A673 (cell line): ENCODE measurements at regions of chr1 and their contacts with region 1.

Region 1: DNA sequence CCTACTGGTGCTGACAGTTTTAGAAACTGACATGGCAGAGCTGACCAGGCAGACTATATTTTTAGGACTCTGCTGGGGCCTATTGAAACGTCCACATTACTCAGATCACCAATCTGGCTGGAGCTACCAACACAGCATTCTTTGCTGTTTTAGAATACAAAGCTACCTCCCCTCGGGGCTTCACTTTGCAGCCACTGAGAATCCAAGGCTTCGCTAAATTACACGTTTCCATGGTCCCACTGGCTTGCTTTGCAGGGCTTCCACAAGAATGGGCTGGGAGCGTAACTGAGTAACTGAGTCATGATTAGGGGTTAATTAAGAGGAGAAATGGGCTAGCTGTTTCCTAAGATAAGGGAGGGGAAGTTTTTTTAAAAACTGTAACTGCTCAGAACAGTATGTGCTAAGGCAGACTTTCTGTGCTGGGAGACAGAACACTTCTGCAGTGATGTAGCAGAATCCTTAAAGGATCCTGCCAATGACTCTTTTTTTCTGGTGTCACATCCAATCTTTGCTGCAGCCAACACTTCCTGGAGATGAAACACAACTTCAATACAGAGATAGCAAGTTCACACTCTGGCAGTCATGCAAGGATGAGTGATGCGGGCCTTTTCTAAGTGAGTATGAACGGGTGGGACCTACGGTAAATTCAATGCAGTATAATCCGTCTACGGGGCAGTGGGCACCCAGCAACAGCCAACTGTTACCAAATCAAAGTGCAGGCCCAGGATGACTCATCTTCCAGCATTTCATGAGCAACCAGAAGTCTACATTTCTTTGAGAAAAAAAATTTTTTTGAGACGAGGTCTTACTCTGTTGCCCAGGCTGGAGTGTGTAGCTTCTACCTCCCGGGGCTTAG is 21.5 kb downstream of the NDUFS5 start:
- DNase-seq: peak; percentile 27
- H3K4me3 ChIP-seq: no peak overlapping the region
- H3K27ac ChIP-seq: no peak overlapping the region
- H3K4me1 ChIP-seq: no peaks in the 10 kb centered on the region
- H3K27me3 ChIP-seq: no peaks in the 10 kb centered on the region
- CTCF ChIP-seq: no peak

Region 2: DNA sequence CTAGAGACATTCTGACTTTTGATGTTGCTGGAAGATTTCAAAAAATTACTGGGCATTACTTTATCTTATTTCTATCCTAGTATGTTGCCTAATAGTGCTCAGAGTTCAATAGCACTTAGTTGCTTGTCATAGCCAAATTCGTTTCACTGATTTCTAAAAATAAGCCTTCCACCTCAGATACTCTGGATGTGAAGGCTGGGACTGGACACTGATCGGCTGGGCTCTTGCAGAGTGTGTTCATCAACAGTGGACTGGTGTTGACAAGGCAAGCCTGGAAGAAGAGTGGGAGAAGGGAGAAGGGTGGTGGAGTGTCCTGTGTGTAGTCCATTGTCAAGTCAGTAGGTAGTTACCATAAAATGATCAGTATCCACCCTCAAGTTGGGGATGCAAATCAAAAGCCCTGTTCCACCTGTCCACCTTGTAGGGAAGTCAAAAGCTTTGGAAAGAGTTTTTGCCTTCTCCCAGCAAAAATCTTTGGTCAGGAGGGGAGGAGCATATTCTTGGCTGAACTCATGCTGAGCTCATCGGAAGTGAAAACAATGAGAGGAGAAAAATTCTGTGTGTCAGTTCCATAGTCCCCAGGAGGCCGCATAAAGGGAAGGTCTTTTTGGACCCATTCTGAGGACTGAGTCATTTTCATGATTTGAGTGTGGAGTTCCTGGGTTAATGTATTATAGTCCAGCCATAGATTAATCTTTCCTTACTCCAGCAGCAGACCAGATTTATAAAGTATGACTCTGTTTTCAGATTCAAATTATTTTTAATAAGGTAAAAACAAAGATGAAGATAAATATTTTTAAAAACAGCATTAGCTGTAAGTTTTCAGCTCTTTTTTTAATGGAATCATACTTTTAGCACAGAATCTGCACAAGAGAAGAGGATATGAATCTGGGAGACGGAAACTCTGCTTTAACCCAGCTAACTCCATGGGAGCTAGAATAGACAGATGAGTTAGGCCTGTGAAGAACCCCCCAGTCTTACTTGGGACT is 344.4 kb after region 1 on chr1:
- CTCF ChIA-PET with region 1: no interaction called
- POLR2A ChIA-PET with region 1: interaction called, 15 read pairs
- intact Hi-C with region 1: no loop called
- DNase-seq: peak; percentile 94
- H3K4me3 ChIP-seq: peak overlapping the region; percentile 6
- H3K27ac ChIP-seq: peak overlapping the region; percentile 85
- H3K4me1 ChIP-seq: peaks cover 60% of the 10 kb centered on the region
- H3K27me3 ChIP-seq: no peaks in the 10 kb centered on the region
- CTCF ChIP-seq: no peak